ENCODE measurements at regions of chr6 and their contacts with region 1.

Region 1: DNA sequence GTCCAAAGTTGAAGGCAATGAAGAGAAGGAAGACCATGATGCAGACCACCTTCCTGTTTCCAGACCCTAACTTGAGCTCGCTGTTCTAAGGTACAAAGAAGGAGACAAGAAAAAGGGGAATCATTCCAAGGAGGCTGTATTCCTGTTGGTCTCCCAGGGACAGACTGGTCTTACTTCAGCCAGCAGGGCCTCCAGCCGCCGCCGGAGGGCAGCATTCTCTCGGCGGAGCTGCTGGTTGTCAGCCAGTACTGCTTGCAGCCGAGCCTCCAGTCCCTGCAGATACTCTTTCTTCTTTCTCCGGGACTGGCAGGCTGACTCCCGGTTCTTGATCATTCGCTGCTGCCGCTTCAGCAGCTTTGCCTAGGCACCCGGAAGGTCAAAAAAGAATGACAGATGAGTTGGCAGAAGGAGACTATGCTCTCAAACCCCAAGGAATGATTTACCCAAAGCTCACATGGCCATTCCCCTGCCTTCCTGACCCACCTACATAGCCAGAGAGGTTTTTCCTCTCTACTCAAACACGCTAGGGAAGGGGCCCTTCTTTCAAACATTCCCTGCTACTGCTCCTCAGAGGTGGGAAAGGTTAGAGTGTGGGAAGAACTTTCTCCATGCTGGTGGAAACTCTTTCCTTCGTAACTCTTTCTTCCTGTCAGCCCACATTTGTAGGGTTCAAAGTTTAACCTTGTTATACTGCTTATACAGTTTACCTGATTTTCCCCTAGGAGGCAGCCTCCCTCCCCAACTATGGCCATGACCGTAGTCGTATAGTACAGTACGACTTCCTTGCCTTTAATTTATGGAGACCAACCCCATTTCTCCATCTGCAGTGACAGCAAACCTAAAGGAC is 9.0 kb downstream of the ATF6B start:
- DNase-seq: peak; percentile 66 to 94 (median 85)
- ATAC-seq: peak; percentile 87 to 94 (median 91)
- H3K4me3 ChIP-seq: no peak overlapping the region
- H3K27ac ChIP-seq: no peak overlapping the region
- H3K4me1 ChIP-seq: peaks cover 0 to 9% (median 0%) of the 10 kb centered on the region in 3 donors
- H3K27me3 ChIP-seq: no peaks in the 10 kb centered on the region
- CTCF ChIP-seq: peak; percentile 76 to 88 (median 84)

Region 2: GRCh38 chr6:32166411-32167061 is 47.5 kb after region 1 on chr6:
- intact Hi-C with region 1: loop called in 1 of 3 experiments (anchors 10 kb)
- DNase-seq: peak in 1 of 6 donors; percentile 73
- ATAC-seq: peak in 1 of 4 donors; percentile 13
- H3K4me3 ChIP-seq: no peak overlapping the region
- H3K27ac ChIP-seq: no peak overlapping the region
- H3K4me1 ChIP-seq: no peaks in the 10 kb centered on the region
- H3K27me3 ChIP-seq: no peaks in the 10 kb centered on the region
- CTCF ChIP-seq: no peak

Measured in pancreas (tissue), 10 donors.